ENCODE measurements at regions of chr15 and their contacts with region 1.

Region 1: GRCh38 chr15:52735231-52736089 is 54.7 kb downstream of the ONECUT1 start:
- DNase-seq: peak; percentile 47 to 57
- ATAC-seq: peak; percentile 16 to 39
- H3K4me3 ChIP-seq: no peak overlapping the region
- H3K27ac ChIP-seq: peak overlapping the region in 3 of 4 donors; percentile 86 to 89 (median 86)
- H3K4me1 ChIP-seq: peaks cover 36 to 44% of the 10 kb centered on the region in 2 donors
- H3K27me3 ChIP-seq: no peaks in the 10 kb centered on the region
- CTCF ChIP-seq: peak; percentile 84 to 93 (median 85)
- POLR2A ChIP-seq: no peak

Region 2: GRCh38 chr15:52331490-52332240 is 403.8 kb before region 1 on chr15:
- in situ Hi-C with region 1: loop called in 2 of 4 experiments (anchors 25 kb)
- intact Hi-C with region 1: loop called (anchors 2 kb)
- DNase-seq: peak; percentile 24 to 33
- ATAC-seq: peak; percentile 82 to 87
- H3K4me3 ChIP-seq: no peak overlapping the region
- H3K27ac ChIP-seq: no peak overlapping the region
- H3K4me1 ChIP-seq: peaks cover 13 to 23% of the 10 kb centered on the region in 2 donors
- H3K27me3 ChIP-seq: no peaks in the 10 kb centered on the region
- CTCF ChIP-seq: peak in 4 of 5 experiments; percentile 20 to 49 (median 33)
- POLR2A ChIP-seq: no peak

Region 3: DNA sequence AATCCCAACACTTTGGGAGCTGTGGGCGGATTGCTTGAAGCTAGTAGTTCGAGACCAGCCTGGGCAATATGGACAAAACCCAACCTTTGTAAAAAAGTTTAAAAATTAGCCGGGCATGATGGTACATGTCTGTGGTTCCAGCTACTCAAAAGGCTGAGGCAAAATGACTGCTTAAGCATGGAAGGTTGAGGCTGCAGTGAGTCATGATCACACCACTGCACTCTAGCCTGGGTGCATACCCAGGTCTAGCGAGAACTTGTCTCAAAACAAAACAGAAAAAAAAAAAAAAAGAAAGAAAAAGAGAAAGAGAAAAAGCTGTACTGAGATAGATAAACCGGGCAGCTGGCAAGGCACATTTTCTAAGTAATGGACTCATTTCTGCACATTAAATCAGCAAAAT is 177.3 kb before region 1 on chr15:
- in situ Hi-C with region 1: no loop called
- intact Hi-C with region 1: loop called (anchors 10 kb)
- DNase-seq: no peak
- ATAC-seq: peak; percentile 35 to 55
- H3K4me3 ChIP-seq: no peak overlapping the region
- H3K27ac ChIP-seq: peak overlapping the region; percentile 68 to 86 (median 76)
- H3K4me1 ChIP-seq: peaks cover 81 to 90% of the 10 kb centered on the region in 2 donors
- H3K27me3 ChIP-seq: no peaks in the 10 kb centered on the region
- CTCF ChIP-seq: no peak
- POLR2A ChIP-seq: no peak

Region 4: GRCh38 chr15:52615284-52615683 is 120.2 kb before region 1 on chr15:
- in situ Hi-C with region 1: loop called in 3 of 4 experiments (anchors 10 to 25 kb)
- intact Hi-C with region 1: no loop called
- DNase-seq: no peak
- ATAC-seq: no peak
- H3K4me3 ChIP-seq: no peak overlapping the region
- H3K27ac ChIP-seq: peak overlapping the region in 1 of 4 donors; percentile 41
- H3K4me1 ChIP-seq: peaks cover 0 to 14% of the 10 kb centered on the region in 2 donors
- H3K27me3 ChIP-seq: no peaks in the 10 kb centered on the region
- CTCF ChIP-seq: no peak
- POLR2A ChIP-seq: no peak

Region 5: DNA sequence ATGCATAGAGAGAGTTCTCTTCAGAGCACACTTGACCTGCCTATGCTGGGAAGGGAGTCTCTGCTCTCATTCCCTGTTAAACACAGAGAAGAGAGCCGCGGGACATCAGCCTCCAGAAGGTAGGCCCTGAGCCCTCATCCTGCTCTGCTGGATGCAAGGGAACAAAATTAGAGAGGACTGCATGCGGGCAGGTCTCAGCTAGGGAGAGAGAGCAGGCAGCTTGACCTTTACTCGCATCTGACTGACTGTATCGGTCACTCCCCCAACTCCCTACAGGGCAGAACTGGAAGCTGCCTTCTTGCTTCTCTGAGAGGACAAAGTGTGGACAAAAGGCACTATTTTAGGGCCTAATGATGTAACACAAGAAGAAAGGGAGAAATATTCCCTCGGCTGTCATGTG is 17.6 kb before region 1 on chr15:
- in situ Hi-C with region 1: no loop called
- intact Hi-C with region 1: no loop called
- DNase-seq: no peak
- ATAC-seq: no peak
- H3K4me3 ChIP-seq: no peak overlapping the region
- H3K27ac ChIP-seq: no peak overlapping the region
- H3K4me1 ChIP-seq: no peaks in the 10 kb centered on the region
- H3K27me3 ChIP-seq: no peaks in the 10 kb centered on the region
- CTCF ChIP-seq: no peak
- POLR2A ChIP-seq: no peak